ENCODE measurements at regions of chr13 and their contacts with region 1.

Region 1: DNA sequence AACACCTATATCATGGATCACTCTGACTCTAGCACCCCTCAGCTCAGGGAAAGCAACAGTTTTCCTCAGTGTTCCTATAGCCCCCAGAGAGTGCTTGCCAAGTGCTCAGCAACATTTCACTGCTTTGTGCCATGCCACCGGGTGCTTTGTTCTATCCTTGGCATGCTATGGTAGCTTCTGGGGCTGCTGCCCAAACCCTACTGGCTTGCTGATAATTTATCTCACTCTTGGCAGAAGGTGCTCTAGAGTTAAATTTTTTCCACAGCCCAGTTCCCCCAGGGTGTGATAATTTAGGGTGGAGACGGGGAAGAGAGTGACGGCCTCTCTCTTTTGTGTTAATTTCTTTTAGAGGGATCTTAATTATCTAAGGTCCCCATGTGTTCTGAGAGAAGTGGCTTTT is 12.6 kb upstream of the CSNK1A1L start:
- DNase-seq: no peak
- ATAC-seq: no peak
- H3K4me3 ChIP-seq: no peak overlapping the region
- H3K4me3 Mint-ChIP-seq: no peak overlapping the region
- H3K27ac ChIP-seq: no peak overlapping the region
- H3K27ac Mint-ChIP-seq: no peak overlapping the region
- H3K4me1 ChIP-seq: no peaks in the 10 kb centered on the region
- H3K4me1 Mint-ChIP-seq: no peaks in the 10 kb centered on the region
- H3K27me3 ChIP-seq: no peaks in the 10 kb centered on the region
- H3K27me3 Mint-ChIP-seq: peaks cover 7% of the 10 kb centered on the region
- CTCF ChIP-seq: no peak

Region 2: GRCh38 chr13:38914070-38914469 is 1796.1 kb after region 1 on chr13:
- CTCF ChIA-PET with region 1: no interaction called
- POLR2A ChIA-PET with region 1: no interaction called
- intact Hi-C with region 1: loop called in 1 of 2 experiments (anchors 10 kb)
- DNase-seq: no peak
- ATAC-seq: no peak
- H3K4me3 ChIP-seq: no peak overlapping the region
- H3K4me3 Mint-ChIP-seq: no peak overlapping the region
- H3K27ac ChIP-seq: no peak overlapping the region
- H3K27ac Mint-ChIP-seq: no peak overlapping the region
- H3K4me1 ChIP-seq: no peaks in the 10 kb centered on the region
- H3K4me1 Mint-ChIP-seq: no peaks in the 10 kb centered on the region
- H3K27me3 ChIP-seq: no peaks in the 10 kb centered on the region
- H3K27me3 Mint-ChIP-seq: peaks cover 5% of the 10 kb centered on the region
- CTCF ChIP-seq: no peak